ENCODE measurements at regions of chr10 and their contacts with region 1.

Region 1: GRCh38 chr10:102480396-102480795 is 22.1 kb downstream of the ACTR1A start:
- DNase-seq: no peak
- H3K4me3 Mint-ChIP-seq: no peak overlapping the region
- H3K27ac Mint-ChIP-seq: no peak overlapping the region
- H3K4me1 Mint-ChIP-seq: no peaks in the 10 kb centered on the region
- H3K27me3 Mint-ChIP-seq: no peaks in the 10 kb centered on the region
- CTCF ChIP-seq: no peak

Region 2: DNA sequence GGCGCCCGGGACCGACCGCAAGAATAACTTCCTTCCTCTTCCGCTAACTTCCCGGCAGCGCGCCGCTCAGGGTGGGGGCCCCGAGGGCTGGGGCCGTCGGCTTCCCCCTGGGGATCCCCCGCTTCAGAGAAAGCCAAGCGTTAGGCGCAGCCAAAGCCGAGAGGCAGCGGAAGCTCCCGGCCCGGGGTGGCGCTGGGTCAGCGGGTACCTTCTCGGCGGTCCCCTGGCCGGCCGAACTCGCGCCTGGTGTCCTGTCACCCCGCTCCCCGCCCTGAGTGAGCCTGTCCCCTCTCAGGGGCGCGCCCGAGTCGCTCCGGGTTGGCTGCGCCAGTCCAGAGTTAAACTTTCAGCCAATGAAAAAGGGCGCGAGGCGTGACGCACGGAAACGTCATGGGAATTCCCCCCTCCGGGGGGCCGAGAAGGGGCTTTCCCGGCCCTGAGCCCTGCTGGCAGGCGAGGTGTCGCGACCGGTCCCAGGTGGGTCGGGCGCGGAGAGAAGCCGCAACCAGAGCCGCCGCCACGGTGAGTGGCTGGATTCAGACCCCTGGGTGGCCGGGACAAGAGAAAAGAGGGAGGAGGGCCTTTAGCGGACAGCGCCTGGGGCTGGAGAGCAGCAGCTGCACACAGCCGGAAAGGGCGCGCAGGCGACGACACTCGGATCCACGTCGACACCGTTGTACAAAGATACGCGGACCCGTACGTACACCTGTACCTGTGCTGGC is 86.2 kb before region 1 on chr10:
- CTCF ChIA-PET with region 1: interaction called, 4 read pairs
- POLR2A ChIA-PET with region 1: no interaction called
- intact Hi-C with region 1: loop called (anchors 1 kb)
- DNase-seq: peak; percentile 96
- H3K4me3 Mint-ChIP-seq: peak overlapping the region; percentile 92
- H3K27ac Mint-ChIP-seq: peak overlapping the region; percentile 99
- H3K4me1 Mint-ChIP-seq: peaks cover 7% of the 10 kb centered on the region
- H3K27me3 Mint-ChIP-seq: no peaks in the 10 kb centered on the region
- CTCF ChIP-seq: no peak

Region 3: GRCh38 chr10:102450194-102450938 is 30.0 kb before region 1 on chr10:
- CTCF ChIA-PET with region 1: interaction called, 15 read pairs
- POLR2A ChIA-PET with region 1: interaction called, 7 read pairs
- intact Hi-C with region 1: no loop called
- DNase-seq: peak; percentile 76
- H3K4me3 Mint-ChIP-seq: peak overlapping the region; percentile 89
- H3K27ac Mint-ChIP-seq: peak overlapping the region; percentile 80
- H3K4me1 Mint-ChIP-seq: peaks cover 7% of the 10 kb centered on the region
- H3K27me3 Mint-ChIP-seq: no peaks in the 10 kb centered on the region
- CTCF ChIP-seq: no peak

Region 4: DNA sequence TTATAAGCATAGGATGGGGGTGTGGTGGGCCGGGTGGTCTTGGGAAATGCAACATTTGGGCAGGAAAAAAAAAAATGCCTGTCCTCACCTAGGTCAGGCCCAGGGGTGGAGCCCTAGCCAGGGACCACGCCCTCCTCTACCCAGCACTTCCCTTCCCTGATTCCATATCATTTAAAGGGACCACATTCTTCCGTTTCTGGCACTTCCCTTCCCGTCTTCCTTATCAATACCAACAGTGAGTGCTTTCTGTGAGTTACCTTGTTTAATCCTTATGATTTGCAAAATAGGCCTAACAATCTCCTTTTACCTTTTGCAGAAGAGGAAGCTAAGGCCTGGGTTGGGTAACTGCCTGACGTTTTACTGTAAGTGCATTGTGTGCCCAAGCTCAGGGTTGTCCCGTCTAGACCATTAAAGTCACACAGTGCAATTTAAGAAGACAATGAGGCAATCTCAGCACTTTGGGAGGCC is 12.4 kb before region 1 on chr10:
- CTCF ChIA-PET with region 1: interaction called, 28 read pairs
- POLR2A ChIA-PET with region 1: no interaction called
- intact Hi-C with region 1: no loop called
- DNase-seq: no peak
- H3K4me3 Mint-ChIP-seq: peak overlapping the region; percentile 27
- H3K27ac Mint-ChIP-seq: no peak overlapping the region
- H3K4me1 Mint-ChIP-seq: no peaks in the 10 kb centered on the region
- H3K27me3 Mint-ChIP-seq: no peaks in the 10 kb centered on the region
- CTCF ChIP-seq: no peak

Region 5: DNA sequence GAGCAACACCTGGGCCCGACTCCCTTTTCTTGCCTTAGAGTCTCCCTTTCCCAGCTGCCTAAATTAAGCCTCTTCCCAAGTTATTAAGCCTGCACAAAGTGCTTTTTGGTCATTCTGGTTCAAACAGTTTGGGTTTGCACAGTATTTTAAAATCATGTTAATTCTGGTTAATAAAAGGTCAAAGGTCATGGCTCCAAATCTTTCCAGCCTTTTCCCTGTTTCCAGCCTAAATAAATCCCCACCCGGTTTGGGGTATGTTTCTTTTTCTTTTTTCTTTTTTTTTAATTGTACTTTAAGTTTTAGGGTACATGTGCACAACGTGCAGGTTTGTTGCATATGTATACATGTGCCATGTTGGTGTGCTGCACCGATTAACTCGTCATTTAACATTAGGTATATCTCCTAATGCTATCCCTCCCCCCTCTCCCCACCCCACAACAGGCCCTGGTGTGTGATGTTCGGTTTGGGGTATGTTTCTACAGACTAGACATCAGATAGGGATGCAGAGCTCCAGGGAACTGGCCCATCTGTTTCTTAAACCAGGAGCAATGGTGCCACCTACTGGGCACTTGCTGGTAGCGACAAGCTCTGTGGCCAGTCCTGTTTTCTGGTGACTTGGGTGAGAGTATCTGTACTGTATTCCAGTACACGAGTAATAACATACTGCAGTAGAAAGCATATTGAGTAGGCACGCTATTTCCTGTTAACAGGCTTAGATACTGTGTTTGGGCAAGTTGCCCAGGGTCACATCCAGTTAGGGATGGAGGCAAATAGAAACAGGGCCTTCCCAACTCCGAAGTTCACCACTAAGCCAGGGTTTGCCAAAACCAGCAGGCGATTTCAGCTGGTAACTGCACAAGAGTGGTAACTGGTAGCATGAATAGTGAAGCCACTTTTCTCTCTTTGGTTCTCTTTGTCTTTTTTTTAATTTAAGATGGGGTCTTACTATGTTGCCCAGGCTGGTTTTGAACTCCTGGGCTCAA is 103.3 kb after region 1 on chr10:
- CTCF ChIA-PET with region 1: no interaction called
- POLR2A ChIA-PET with region 1: no interaction called
- intact Hi-C with region 1: loop called (anchors 2 kb)
- DNase-seq: peak; percentile 87
- H3K4me3 Mint-ChIP-seq: no peak overlapping the region
- H3K27ac Mint-ChIP-seq: no peak overlapping the region
- H3K4me1 Mint-ChIP-seq: no peaks in the 10 kb centered on the region
- H3K27me3 Mint-ChIP-seq: no peaks in the 10 kb centered on the region
- CTCF ChIP-seq: peak; percentile 78